Sigmoid colon (tissue), 7 donors: ENCODE measurements at regions of chr21 and their contacts with region 1.

Region 1: GRCh38 chr21:29372063-29372802 is 73.5 kb downstream of the BACH1 start:
- DNase-seq: peak; percentile 64
- H3K4me3 ChIP-seq: no peak overlapping the region
- H3K27ac ChIP-seq: no peak overlapping the region
- H3K4me1 ChIP-seq: no peaks in the 10 kb centered on the region
- H3K27me3 ChIP-seq: no peaks in the 10 kb centered on the region
- CTCF ChIP-seq: peak; percentile 65 to 82 (median 76)
- EP300 ChIP-seq: no peak
- POLR2A ChIP-seq: no peak

Region 2: DNA sequence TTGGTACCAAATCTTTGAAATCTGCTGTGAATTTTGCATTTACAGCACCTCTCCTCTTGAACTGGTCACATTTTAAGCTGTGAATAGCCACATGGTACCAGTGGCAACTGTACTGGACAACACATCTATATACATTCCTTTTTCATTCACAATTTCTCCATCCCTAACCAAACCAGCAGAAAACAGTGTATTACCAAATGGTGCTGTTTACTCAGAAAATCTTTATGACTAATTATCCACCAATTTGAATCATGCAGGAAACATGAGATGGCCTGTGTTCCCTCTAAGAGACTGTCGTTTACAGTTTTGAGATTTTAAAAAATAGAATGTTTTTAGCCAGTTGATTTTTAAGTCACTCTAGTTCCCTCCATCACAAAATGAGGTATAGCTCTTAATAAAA is 281.2 kb before region 1 on chr21:
- intact Hi-C with region 1: loop called (anchors 2 kb)
- DNase-seq: no peak
- H3K4me3 ChIP-seq: no peak overlapping the region
- H3K27ac ChIP-seq: peak overlapping the region in 1 of 4 donors; percentile 55
- H3K4me1 ChIP-seq: peaks cover 0 to 36% (median 21%) of the 10 kb centered on the region in 4 donors
- H3K27me3 ChIP-seq: no peaks in the 10 kb centered on the region
- CTCF ChIP-seq: no peak
- EP300 ChIP-seq: no peak
- POLR2A ChIP-seq: no peak

Region 3: GRCh38 chr21:29342363-29342957 is 29.8 kb before region 1 on chr21:
- intact Hi-C with region 1: no loop called
- DNase-seq: peak; percentile 82
- H3K4me3 ChIP-seq: peak overlapping the region in 3 of 4 donors; percentile 6 to 26 (median 20)
- H3K27ac ChIP-seq: peak overlapping the region; percentile 67 to 80 (median 73)
- H3K4me1 ChIP-seq: peaks cover 0 to 89% (median 64%) of the 10 kb centered on the region in 4 donors
- H3K27me3 ChIP-seq: no peaks in the 10 kb centered on the region
- CTCF ChIP-seq: no peak
- EP300 ChIP-seq: peak in 1 of 4 donors; percentile 26
- POLR2A ChIP-seq: no peak

Region 4: DNA sequence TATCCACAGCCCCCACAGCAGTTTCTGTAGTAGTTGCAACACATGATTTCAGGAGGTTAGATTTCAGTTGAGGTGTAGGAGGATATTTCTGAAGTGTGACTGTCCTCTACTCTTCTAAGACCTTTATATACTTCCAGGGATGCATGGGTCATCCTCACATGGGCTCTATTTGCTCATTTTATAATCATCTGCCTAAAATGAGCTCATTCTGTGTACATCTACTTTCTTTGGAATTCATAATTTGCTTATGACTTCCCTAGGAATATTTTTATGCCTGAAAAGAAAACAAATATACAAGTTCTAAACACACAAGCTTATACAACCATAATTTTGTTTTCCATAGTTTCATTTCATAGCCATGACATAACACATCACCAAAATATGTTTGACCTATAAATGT is 1374.9 kb after region 1 on chr21 and contains the start of gene KRTAP21-2:
- intact Hi-C with region 1: no loop called
- DNase-seq: no peak
- H3K4me3 ChIP-seq: no peak within 1 kb of the TSS
- H3K27ac ChIP-seq: no peak within 1 kb of the TSS
- H3K4me1 ChIP-seq: no peaks in the 10 kb centered on the region
- H3K27me3 ChIP-seq: no peaks in the 10 kb centered on the region
- CTCF ChIP-seq: no peak
- EP300 ChIP-seq: no peak
- POLR2A ChIP-seq: no peak
- total RNA-seq, gene KRTAP21-2: not detected